Activated naive CD4-positive, alpha-beta T cell treated with anti-CD3 and anti-CD28 coated beads for 36 hours (primary cell): ENCODE measurements at regions of chr13 and their contacts with region 1.

Region 1: GRCh38 chr13:73212482-73212881 is 153.7 kb downstream of the KLF5 start:
- DNase-seq: no peak
- H3K4me3 Mint-ChIP-seq: no peak overlapping the region
- H3K27ac Mint-ChIP-seq: no peak overlapping the region
- H3K4me1 Mint-ChIP-seq: peaks cover 9% of the 10 kb centered on the region
- H3K27me3 Mint-ChIP-seq: no peaks in the 10 kb centered on the region

Region 2: GRCh38 chr13:72727417-72728289 is 484.8 kb before region 1 on chr13 and contains the starts of genes BORA and MZT1:
- CTCF ChIA-PET with region 1: no interaction called
- intact Hi-C with region 1: loop called (anchors 1 kb)
- DNase-seq: peak; percentile 97
- H3K4me3 Mint-ChIP-seq: peak within 1 kb of the TSS; percentile 90
- H3K27ac Mint-ChIP-seq: peak within 1 kb of the TSS; percentile 81
- H3K4me1 Mint-ChIP-seq: peaks cover 41% of the 10 kb centered on the region
- H3K27me3 Mint-ChIP-seq: no peaks in the 10 kb centered on the region
- total RNA-seq, gene BORA: 17.3 to 19.5 TPM
- total RNA-seq, gene MZT1: 32.4 to 32.9 TPM